Activated CD4-positive, alpha-beta T cell treated with anti-CD3 and anti-CD28 coated beads, Interleukin-2, amount 10 ng/mL, durations not matched to agents 24 days and 14 days (primary cell): ENCODE measurements at regions of chr10 and their contacts with region 1.

Region 1: GRCh38 chr10:100653957-100654781 is 91.2 kb upstream of the PAX2 start:
- DNase-seq: peak; percentile 72
- H3K4me3 Mint-ChIP-seq: peak overlapping the region; percentile 77
- H3K27ac Mint-ChIP-seq: peak overlapping the region; percentile 22
- H3K4me1 Mint-ChIP-seq: peaks cover 27% of the 10 kb centered on the region
- H3K27me3 Mint-ChIP-seq: peaks cover 66% of the 10 kb centered on the region

Region 2: GRCh38 chr10:100827819-100828737 is 173.9 kb after region 1 on chr10:
- intact Hi-C with region 1: loop called (anchors 5 kb)
- DNase-seq: peak; percentile 77
- H3K4me3 Mint-ChIP-seq: peak overlapping the region; percentile 85
- H3K27ac Mint-ChIP-seq: peak overlapping the region; percentile 52
- H3K4me1 Mint-ChIP-seq: peaks cover 24% of the 10 kb centered on the region
- H3K27me3 Mint-ChIP-seq: peaks cover 79% of the 10 kb centered on the region